Natural killer cell (primary cell): ENCODE measurements at regions of chr12 and their contacts with region 1.

Region 1: DNA sequence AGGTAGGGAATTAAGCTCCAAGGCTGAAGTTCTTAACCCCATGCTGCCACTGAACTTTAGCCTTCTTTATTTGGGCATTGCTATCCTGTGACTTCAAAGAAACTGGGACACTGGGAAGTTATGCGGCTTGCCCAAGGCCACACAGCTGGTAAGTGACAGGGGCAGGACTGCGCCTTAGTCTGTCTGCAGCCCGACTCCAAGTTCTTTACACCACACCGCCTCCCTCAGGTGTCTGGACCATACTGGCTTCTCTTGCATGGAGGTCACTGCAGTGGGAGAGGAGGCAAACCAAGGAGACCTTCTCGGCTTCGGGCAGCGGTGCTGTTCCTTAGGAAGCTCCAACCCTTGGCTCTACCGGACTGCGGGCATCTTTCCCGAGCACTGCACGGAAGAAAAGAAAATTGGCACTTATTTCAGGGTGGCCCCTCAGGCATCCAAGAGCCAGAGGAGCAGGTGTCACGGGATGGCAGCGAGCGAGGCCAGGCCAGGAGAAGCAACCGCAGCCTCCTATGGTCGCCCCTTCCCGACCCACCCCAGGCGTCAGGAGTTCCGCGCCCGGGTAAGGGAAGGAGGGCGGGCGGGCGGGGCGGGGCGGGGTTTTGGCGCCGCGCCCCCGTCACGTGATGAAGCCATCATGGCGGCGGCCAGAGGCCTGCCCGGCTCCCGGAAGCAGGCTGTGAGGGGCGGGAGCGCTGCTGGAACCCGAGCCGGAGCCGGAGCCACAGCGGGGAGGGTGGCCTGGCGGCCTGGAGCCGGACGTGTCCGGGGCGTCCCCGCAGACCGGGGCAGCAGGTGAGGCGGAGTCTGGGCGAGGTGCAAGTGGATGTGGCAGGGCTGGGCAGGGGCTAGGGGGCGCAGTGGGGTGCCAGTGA is 16.4 kb upstream of the ESPL1 start:
- DNase-seq: peak; percentile 64 to 85
- ATAC-seq: peak; percentile 90 to 91 (median 90)
- H3K4me3 ChIP-seq: peak overlapping the region; percentile 90
- H3K4me3 Mint-ChIP-seq: peak overlapping the region; percentile 98
- H3K27ac ChIP-seq: peak overlapping the region; percentile 68
- H3K27ac Mint-ChIP-seq: peak overlapping the region; percentile 84 to 88
- H3K4me1 ChIP-seq: peaks cover 37% of the 10 kb centered on the region
- H3K4me1 Mint-ChIP-seq: peaks cover 22 to 26% of the 10 kb centered on the region in 2 donors
- H3K27me3 ChIP-seq: no peaks in the 10 kb centered on the region
- H3K27me3 Mint-ChIP-seq: no peaks in the 10 kb centered on the region
- CTCF ChIP-seq: peak; percentile 41

Region 2: DNA sequence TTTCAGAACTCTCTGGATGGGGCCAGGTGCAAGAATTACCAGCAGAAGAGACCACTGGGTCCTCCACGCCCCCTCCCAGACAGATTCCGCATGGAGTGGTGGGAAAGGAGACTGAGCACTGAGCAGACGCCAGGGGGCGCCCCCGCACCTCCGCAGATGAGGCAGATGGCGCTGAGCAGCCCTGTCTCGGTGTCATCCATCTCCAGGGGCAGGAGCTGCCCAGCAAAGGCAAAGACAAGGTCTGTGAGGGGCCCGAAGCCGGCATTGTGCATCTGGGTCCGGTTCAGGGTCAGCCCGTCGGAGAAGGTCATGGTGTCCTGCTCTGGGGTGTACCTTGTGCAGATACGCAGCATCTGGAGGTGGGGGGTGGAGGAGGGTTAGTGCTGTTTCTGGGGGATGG is 38.4 kb before region 1 on chr12:
- intact Hi-C with region 1: loop called (anchors 1 kb)
- DNase-seq: peak; percentile 84 to 90
- ATAC-seq: peak; percentile 59 to 82 (median 71)
- H3K4me3 ChIP-seq: no peak overlapping the region
- H3K4me3 Mint-ChIP-seq: no peak overlapping the region
- H3K27ac ChIP-seq: no peak overlapping the region
- H3K27ac Mint-ChIP-seq: peak overlapping the region; percentile 34 to 38
- H3K4me1 ChIP-seq: peaks cover 63% of the 10 kb centered on the region
- H3K4me1 Mint-ChIP-seq: peaks cover 60 to 78% of the 10 kb centered on the region in 2 donors
- H3K27me3 ChIP-seq: no peaks in the 10 kb centered on the region
- H3K27me3 Mint-ChIP-seq: no peaks in the 10 kb centered on the region
- CTCF ChIP-seq: peak; percentile 91

Region 3: GRCh38 chr12:53267999-53268647 is 16.4 kb after region 1 on chr12 and contains the start of gene ESPL1:
- intact Hi-C with region 1: loop called (anchors 1 kb)
- DNase-seq: peak; percentile 76 to 92
- ATAC-seq: peak; percentile 90 to 93 (median 90)
- H3K4me3 ChIP-seq: peak within 1 kb of the TSS; percentile 59
- H3K4me3 Mint-ChIP-seq: peak within 1 kb of the TSS; percentile 99
- H3K27ac ChIP-seq: peak within 1 kb of the TSS; percentile 53
- H3K27ac Mint-ChIP-seq: peak within 1 kb of the TSS; percentile 91 to 93
- H3K4me1 ChIP-seq: peaks cover 23% of the 10 kb centered on the region
- H3K4me1 Mint-ChIP-seq: peaks cover 22 to 23% of the 10 kb centered on the region in 2 donors
- H3K27me3 ChIP-seq: no peaks in the 10 kb centered on the region
- H3K27me3 Mint-ChIP-seq: no peaks in the 10 kb centered on the region
- CTCF ChIP-seq: no peak
- total RNA-seq, gene ESPL1: 1.9 to 5.8 (median 3.1) TPM

Region 4: GRCh38 chr12:53287741-53288216 is 36.1 kb after region 1 on chr12:
- intact Hi-C with region 1: no loop called
- DNase-seq: peak; percentile 62 to 90
- ATAC-seq: peak; percentile 77 to 95 (median 92)
- H3K4me3 ChIP-seq: no peak overlapping the region
- H3K4me3 Mint-ChIP-seq: no peak overlapping the region
- H3K27ac ChIP-seq: no peak overlapping the region
- H3K27ac Mint-ChIP-seq: peak overlapping the region in 1 of 2 donors; percentile 60
- H3K4me1 ChIP-seq: no peaks in the 10 kb centered on the region
- H3K4me1 Mint-ChIP-seq: peaks cover 7 to 8% of the 10 kb centered on the region in 2 donors
- H3K27me3 ChIP-seq: no peaks in the 10 kb centered on the region
- H3K27me3 Mint-ChIP-seq: no peaks in the 10 kb centered on the region
- CTCF ChIP-seq: peak; percentile 62